Common myeloid progenitor, CD34-positive (primary cell): ENCODE measurements at regions of chr9 and their contacts with region 1.

Region 1: DNA sequence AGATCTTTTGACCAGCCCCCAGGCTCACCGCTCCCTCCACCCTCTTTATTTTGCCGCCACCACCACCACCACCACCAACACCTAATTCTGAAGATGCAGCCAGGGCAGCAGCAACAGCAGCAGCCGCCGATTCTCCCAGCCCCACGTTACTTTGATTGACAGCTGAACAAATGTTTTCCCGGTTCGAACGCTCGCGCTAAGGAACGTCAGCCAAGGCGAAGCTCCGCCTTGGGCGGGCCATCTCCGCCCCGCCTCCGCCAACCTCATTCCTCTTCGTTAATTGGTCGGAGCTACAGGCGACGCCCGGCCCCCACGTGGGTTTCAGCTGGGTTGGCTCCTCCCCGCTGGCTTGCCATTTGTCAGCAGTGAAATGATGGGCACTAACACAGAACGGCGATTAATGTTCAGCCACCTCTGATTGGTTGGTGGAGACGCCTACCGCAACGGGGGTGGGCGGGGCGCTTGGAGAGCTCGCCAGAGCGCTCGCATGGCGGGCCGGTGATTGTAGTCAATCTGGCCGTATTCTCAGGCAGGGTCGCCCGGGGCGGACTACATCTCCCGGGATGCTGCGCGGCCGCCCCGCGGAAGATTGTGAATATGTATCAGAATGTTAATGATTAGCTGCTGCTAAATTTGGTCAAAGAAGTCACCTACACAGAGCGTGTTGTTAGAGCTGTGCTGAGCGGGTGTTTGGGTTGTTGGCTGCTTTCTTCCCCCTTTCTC is at the start of gene TLE4:
- DNase-seq: peak; percentile 100
- H3K4me3 ChIP-seq: peak within 1 kb of the TSS; percentile 86 to 100 (median 97)
- H3K27ac ChIP-seq: peak within 1 kb of the TSS; percentile 88 to 93
- H3K4me1 ChIP-seq: peaks cover 16 to 31% (median 20%) of the 10 kb centered on the region in 4 experiments
- H3K27me3 ChIP-seq: peaks cover 0 to 5% (median 4%) of the 10 kb centered on the region in 5 experiments

Region 2: GRCh38 chr9:79555474-79556089 is 15.9 kb before region 1 on chr9:
- CTCF ChIA-PET with region 1: interaction called, 12 read pairs
- POLR2A ChIA-PET with region 1: no interaction called
- DNase-seq: no peak
- H3K4me3 ChIP-seq: no peak overlapping the region
- H3K27ac ChIP-seq: no peak overlapping the region
- H3K4me1 ChIP-seq: peaks cover 0 to 12% (median 6%) of the 10 kb centered on the region in 4 experiments
- H3K27me3 ChIP-seq: no peaks in the 10 kb centered on the region

Region 3: GRCh38 chr9:79583952-79584654 is 12.6 kb after region 1 on chr9:
- CTCF ChIA-PET with region 1: interaction called, 5 read pairs
- POLR2A ChIA-PET with region 1: interaction called, 16 read pairs
- DNase-seq: peak; percentile 30 to 78 (median 72)
- H3K4me3 ChIP-seq: peak overlapping the region in 3 of 7 experiments; percentile 17 to 56 (median 46)
- H3K27ac ChIP-seq: no peak overlapping the region
- H3K4me1 ChIP-seq: peaks cover 34 to 60% (median 51%) of the 10 kb centered on the region in 4 experiments
- H3K27me3 ChIP-seq: no peaks in the 10 kb centered on the region